Dorsolateral prefrontal cortex (tissue), 120 donors: ENCODE measurements at regions of chr2 and their contacts with region 1.

Region 1: DNA sequence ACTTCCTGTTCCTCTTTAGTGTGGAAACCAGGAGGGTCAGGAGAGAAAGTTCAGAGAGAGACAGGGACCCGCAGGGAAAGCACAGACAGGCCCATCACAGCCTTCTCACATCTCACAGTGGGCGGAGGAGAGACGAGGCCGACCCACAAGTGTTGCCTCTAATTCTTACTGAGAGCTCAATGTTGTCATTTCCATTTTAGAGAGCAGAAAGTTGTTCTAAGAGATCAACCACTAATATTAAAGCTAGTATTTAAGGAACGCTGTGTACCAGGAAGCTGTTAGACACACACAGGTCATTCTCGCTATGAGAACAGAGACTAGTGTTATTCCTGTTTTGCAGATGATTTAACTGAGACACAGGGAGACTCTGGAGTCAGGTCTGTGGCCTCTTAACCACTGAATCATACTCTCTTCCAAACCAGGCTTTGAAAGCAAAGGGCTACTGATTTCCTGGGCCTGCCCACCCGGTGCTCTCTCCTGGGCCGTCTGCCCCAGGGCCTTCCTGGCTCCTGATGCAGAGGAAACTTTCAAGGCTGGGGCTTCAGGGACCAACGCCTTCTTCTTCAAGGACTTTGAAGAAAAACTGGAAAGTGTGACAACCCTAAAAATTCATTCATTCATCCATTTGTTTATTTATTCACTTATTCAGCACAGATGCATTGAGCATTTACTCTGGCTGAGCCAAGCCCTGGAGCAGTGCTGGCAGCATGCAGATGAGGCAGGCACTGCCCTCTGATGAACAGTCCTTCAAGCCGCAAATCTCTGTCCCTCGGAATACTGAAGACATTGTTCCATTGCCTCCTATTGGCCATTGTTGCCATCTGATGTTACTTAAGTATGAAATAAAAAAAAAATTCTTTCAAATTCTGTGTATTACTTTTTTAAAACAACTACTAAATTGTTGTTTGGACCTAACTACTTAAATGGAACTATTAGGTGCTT is 37.2 kb upstream of the BIN1 start:
- DNase-seq: peak in 7 of 10 donors; percentile 72 to 87 (median 79)
- H3K4me3 ChIP-seq: peak overlapping the region in 1 of 59 donors; percentile 10
- H3K27ac ChIP-seq: peak overlapping the region; percentile 2 to 98 (median 92)
- H3K27me3 ChIP-seq: no peaks in the 10 kb centered on the region
- CTCF ChIP-seq: peak in 54 of 56 donors; percentile 21 to 75 (median 52)

Region 2: DNA sequence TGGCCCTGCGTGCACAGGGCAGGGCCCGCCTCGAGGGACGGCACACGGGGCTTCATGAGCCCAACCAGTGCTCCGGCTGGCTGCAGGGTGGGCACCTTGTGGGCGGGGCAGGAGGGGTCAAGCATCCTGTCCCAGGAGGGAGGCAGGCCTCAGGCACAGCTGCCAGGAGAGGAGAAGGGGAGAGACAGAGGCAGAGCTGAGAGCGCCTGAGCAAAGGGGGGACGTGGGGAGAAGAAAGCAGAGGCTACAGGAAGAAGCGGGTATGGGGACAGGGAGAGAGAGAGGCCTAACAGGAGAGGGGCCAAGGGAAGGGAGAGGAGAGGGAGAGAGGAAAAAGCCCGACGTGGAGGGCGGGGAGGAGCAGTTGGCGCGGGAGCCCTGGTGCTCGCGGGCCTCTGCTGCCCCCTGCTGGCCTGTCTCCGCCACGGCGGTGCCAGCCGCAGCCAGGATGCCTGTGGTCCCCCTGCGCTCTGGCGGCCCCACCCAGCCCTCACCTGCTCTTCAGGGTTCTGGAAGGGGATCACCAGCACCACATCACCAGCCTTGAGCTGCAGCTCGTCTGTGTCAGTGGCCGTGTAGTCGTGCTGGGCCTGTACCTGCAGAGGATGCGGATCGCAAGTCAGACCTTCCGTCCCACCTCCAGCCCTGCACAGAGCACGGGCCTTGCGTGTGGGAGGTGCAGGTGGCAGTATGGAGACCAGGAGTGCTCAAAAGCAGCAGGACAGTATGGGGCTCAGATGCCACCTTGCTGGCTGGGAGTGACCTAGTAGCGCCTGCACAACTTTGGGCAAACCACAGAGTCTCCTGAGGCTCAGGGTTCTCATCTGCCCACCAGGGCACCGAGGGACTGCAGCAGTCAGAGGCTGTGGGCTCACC is 93.9 kb before region 1 on chr2:
- intact Hi-C with region 1: loop called in 1 of 2 experiments (anchors 5 kb)
- DNase-seq: peak; percentile 63 to 85 (median 75)
- H3K4me3 ChIP-seq: no peak overlapping the region
- H3K27ac ChIP-seq: peak overlapping the region in 58 of 59 donors; percentile 18 to 98 (median 86)
- H3K27me3 ChIP-seq: no peaks in the 10 kb centered on the region
- CTCF ChIP-seq: peak; percentile 76 to 99 (median 96)

Region 3: DNA sequence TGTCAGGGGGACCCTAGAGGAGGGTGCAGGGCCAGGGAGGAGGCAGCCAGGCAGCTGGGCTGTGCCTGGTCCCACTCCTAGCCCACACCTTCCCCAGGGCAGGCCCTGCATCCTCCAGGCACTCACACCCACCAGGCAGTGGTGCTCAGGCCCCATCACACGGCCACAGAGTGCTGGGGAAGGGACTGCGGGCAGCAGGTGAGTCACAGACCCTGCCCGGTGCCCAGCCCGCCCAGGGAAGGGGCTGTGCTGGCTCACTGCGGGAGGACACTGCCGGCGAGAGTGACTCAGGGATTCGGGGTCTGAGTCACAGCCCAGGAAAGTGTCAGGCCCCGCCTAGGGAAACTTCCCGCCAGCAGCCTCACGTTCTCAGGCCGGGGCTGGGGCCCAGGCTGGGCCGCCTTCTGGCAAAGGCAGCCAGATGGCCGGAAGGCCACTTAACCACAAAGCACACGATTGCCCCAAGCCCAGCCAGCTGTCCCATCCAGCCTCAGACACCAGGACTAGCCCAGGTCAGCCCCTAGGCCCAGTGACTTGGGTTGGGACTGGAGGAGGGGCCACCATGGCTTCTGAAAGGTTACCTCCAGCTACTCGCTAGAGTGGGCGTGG is 79.4 kb before region 1 on chr2:
- intact Hi-C with region 1: loop called in 1 of 2 experiments (anchors 2 kb)
- DNase-seq: peak in 5 of 10 donors; percentile 64 to 92 (median 71)
- H3K4me3 ChIP-seq: peak overlapping the region in 1 of 59 donors; percentile 1
- H3K27ac ChIP-seq: peak overlapping the region; percentile 43 to 99 (median 95)
- H3K27me3 ChIP-seq: no peaks in the 10 kb centered on the region
- CTCF ChIP-seq: peak in 4 of 56 donors; percentile 7 to 27 (median 16)

Region 4: GRCh38 chr2:127072970-127073369 is 71.1 kb before region 1 on chr2:
- intact Hi-C with region 1: loop called (anchors 2 kb)
- DNase-seq: peak; percentile 44 to 97 (median 93)
- H3K4me3 ChIP-seq: peak overlapping the region in 8 of 59 donors; percentile 10 to 31 (median 18)
- H3K27ac ChIP-seq: peak overlapping the region; percentile 76 to 99 (median 95)
- H3K27me3 ChIP-seq: no peaks in the 10 kb centered on the region
- CTCF ChIP-seq: peak in 3 of 56 donors; percentile 6 to 21 (median 19)

Region 5: GRCh38 chr2:127094509-127095366 is 49.4 kb before region 1 on chr2:
- intact Hi-C with region 1: no loop called
- DNase-seq: peak in 4 of 10 donors; percentile 62 to 68 (median 65)
- H3K4me3 ChIP-seq: peak overlapping the region in 30 of 59 donors; percentile 0 to 40 (median 19)
- H3K27ac ChIP-seq: peak overlapping the region in 58 of 59 donors; percentile 17 to 99 (median 80)
- H3K27me3 ChIP-seq: no peaks in the 10 kb centered on the region
- CTCF ChIP-seq: no peak